Motor neuron (in vitro differentiated cells): ENCODE measurements at regions of chr12 and their contacts with region 1.

Region 1: GRCh38 chr12:82527165-82527780 is 159.4 kb upstream of the TMTC2 start:
- ATAC-seq: peak in 5 of 8 experiments; percentile 35 to 80 (median 52)
- H3K4me3 ChIP-seq: no peak overlapping the region
- H3K27ac ChIP-seq: no peak overlapping the region
- H3K4me1 ChIP-seq: peaks cover 7 to 10% of the 10 kb centered on the region in 2 donors

Region 2: GRCh38 chr12:81468206-81468605 is 1059.1 kb before region 1 on chr12:
- in situ Hi-C with region 1: no loop called
- ATAC-seq: peak in 4 of 8 experiments; percentile 38 to 86 (median 81)
- H3K4me3 ChIP-seq: no peak overlapping the region
- H3K27ac ChIP-seq: no peak overlapping the region
- H3K4me1 ChIP-seq: peaks cover 0 to 10% of the 10 kb centered on the region in 2 donors

Region 3: GRCh38 chr12:82619644-82620043 is 92.4 kb after region 1 on chr12:
- in situ Hi-C with region 1: loop called in 2 of 9 experiments (anchors 10 kb)
- ATAC-seq: no peak
- H3K4me3 ChIP-seq: no peak overlapping the region
- H3K27ac ChIP-seq: no peak overlapping the region
- H3K4me1 ChIP-seq: no peaks in the 10 kb centered on the region

Region 4: DNA sequence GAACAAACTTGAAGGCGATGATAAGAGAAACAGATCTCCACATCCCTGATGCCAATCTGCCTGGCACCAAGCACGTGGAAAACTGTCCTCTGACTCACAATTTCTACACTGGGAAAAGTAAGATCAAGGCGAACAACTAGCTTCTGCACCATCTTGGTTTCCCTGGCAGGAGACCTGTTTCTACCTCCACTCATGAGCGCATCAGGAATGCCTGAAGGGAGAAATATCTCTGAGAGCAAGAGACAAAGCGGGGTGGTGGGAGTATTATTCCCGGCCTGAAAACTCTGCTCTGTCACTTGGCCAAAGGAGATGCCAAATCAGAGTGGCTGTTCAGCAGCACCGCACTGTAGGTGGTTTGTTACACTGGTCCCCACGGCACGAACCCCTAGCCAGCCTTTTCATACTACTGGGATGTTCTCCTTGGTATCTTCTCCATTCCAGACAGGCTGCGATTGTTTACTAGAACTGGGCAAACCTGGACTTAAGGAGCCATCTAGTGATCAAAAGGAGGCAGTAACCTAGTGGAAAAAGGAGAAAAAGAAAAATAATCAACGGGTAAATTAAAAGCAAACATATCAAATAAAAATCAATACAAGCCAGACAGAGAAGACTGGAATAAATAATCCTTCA is 100.4 kb after region 1 on chr12:
- in situ Hi-C with region 1: loop called in 1 of 9 experiments (anchors 10 kb)
- ATAC-seq: peak in 4 of 8 experiments; percentile 46 to 85 (median 80)
- H3K4me3 ChIP-seq: no peak overlapping the region
- H3K27ac ChIP-seq: no peak overlapping the region
- H3K4me1 ChIP-seq: no peaks in the 10 kb centered on the region